Dendritic cell treated with granulocyte-macrophage colony-stimulating factor and Interleukin-4, amounts not matched to agents 40 ng/mL and 50 ng/mL, for 4 days (primary cell): ENCODE measurements at regions of chr21 and their contacts with region 1.

Region 1: DNA sequence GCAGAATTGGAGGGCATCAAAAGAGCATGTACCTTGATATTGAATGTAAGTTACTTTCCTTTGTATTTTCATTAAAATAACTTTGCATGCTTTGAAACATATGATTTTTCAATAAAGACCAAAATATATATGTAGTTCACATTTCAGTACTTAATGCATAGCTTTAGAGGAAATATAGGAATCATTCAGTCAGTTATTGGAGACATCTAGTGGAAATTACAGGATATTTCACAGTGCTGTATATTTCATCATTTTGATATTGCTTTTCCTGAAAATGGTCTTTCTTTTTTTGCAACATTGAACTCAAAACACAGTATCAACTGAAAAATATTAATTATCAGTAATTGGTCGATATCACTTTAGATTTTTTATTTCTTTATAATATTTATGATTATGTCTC is 375.8 kb downstream of the NCAM2 start:
- H3K4me3 Mint-ChIP-seq: no peak overlapping the region
- H3K27ac Mint-ChIP-seq: no peak overlapping the region
- H3K4me1 Mint-ChIP-seq: no peaks in the 10 kb centered on the region
- H3K27me3 Mint-ChIP-seq: no peaks in the 10 kb centered on the region

Region 2: GRCh38 chr21:21163904-21164303 is 210.1 kb before region 1 on chr21:
- intact Hi-C with region 1: loop called (anchors 5 kb)
- H3K4me3 Mint-ChIP-seq: no peak overlapping the region
- H3K27ac Mint-ChIP-seq: no peak overlapping the region
- H3K4me1 Mint-ChIP-seq: peaks cover 7% of the 10 kb centered on the region
- H3K27me3 Mint-ChIP-seq: no peaks in the 10 kb centered on the region

Region 3: DNA sequence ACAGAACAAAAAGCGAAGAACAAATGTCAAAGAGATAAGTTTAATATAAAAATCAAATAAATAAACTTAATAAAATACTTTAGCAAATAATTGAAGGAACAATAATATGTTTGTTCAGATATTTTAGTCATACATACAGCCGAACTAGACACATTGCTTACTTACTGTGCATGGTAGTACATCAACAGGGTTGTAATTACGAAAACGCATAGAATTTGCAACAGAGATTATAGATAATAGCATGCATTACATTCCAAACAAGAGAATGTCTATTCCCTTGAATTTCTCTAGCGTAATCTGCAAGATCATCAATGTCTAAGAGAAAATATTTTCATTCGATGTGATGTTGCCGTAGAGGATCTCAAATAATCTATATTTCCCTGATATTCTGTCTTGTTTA is 16.2 kb before region 1 on chr21:
- intact Hi-C with region 1: no loop called
- H3K4me3 Mint-ChIP-seq: no peak overlapping the region
- H3K27ac Mint-ChIP-seq: no peak overlapping the region
- H3K4me1 Mint-ChIP-seq: no peaks in the 10 kb centered on the region
- H3K27me3 Mint-ChIP-seq: no peaks in the 10 kb centered on the region